OCI-LY7 (cell line): ENCODE measurements at regions of chr19 and their contacts with region 1.

Region 1: DNA sequence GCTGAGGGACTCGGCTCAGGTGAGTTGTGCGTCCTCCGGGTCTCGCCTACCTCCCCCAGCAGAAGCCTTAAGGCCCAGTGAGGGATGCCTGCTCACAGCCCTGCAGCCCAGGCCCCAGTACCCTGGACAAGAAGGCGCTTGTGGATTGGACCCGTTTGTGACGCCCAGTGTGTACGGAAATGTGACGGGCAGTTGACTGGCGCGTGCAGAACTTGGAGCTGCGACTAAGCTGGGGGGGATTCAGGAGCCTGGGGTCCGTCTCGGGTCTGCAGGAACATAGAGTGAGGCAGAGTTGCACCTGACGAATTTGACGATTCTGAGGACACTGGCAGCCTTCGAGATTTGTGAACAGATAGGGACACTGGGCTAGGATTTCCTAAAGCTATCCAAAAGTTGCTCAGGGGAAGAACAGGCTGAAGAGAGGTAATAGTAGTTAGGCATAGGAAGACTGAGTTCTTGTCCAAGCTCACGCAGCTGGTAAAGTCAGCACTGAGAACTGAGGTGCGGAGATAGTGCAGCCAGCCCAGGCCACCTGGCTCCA is 519 bp downstream of the ZNF551 start:
- DNase-seq: no peak
- H3K4me3 ChIP-seq: peak overlapping the region; percentile 95
- H3K27ac ChIP-seq: no peak overlapping the region
- H3K4me1 ChIP-seq: peaks cover 15% of the 10 kb centered on the region
- CTCF ChIP-seq: no peak

Region 2: GRCh38 chr19:57620673-57621199 is 61.6 kb before region 1 on chr19:
- CTCF ChIA-PET with region 1: no interaction called
- POLR2A ChIA-PET with region 1: no interaction called
- intact Hi-C with region 1: no loop called
- DNase-seq: no peak
- H3K4me3 ChIP-seq: no peak overlapping the region
- H3K27ac ChIP-seq: no peak overlapping the region
- H3K4me1 ChIP-seq: no peaks in the 10 kb centered on the region
- CTCF ChIP-seq: no peak

Region 3: DNA sequence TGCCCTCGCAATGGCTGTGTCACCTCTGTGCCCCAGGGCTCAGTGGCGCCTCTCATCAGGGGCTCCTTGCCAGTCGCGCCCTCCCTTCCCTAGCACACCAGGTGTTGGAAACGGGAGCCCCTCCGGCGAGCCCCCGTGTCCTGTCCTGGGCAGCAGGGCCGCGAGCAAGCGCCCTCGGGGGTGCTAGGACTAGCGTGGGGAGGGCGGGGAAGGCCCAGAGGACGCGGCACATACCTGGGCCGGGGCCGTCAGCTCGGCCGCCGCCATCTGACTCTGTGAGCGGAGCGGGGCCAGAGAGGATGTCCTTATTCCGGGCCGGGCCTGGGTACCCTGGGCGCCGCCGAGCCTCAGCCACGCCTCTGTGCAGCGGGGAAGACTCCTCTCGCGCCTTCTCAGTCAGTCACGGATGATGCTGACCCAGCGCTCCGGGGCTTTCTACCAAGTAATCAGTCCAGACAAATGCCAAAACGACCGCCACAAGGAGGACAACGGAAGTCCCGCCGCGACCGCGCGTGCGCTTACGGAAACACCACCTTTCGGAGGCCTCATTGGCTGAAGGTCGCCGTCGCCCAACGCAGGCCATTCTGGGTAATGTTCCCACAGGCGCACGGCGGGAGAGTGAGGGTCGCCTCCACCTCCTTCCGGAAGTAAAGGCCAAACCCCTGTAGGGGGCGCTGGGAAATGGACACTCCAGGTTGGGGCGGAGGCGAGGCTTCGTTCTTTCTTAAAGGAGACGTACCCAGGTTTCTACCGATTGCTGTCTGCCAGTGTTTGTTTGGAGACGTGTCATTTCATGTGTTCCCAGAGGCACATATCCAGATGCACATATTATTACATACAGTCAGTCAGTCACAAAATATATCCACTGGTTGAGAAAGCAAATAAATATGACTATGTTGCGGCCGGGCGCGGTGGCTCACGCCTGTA is 265.2 kb after region 1 on chr19 and contains the start of gene ZNF256:
- CTCF ChIA-PET with region 1: no interaction called
- POLR2A ChIA-PET with region 1: no interaction called
- intact Hi-C with region 1: loop called (anchors 1 kb)
- DNase-seq: peak; percentile 98
- H3K4me3 ChIP-seq: peak within 1 kb of the TSS; percentile 99
- H3K27ac ChIP-seq: peak within 1 kb of the TSS; percentile 36
- H3K4me1 ChIP-seq: peaks cover 12% of the 10 kb centered on the region
- CTCF ChIP-seq: peak; percentile 71
- total RNA-seq, gene ZNF256: 4.6 and 5.7 TPM in 2 replicates